CD4-positive, alpha-beta T cell (primary cell): ENCODE measurements at regions of chr7 and their contacts with region 1.

Region 1: DNA sequence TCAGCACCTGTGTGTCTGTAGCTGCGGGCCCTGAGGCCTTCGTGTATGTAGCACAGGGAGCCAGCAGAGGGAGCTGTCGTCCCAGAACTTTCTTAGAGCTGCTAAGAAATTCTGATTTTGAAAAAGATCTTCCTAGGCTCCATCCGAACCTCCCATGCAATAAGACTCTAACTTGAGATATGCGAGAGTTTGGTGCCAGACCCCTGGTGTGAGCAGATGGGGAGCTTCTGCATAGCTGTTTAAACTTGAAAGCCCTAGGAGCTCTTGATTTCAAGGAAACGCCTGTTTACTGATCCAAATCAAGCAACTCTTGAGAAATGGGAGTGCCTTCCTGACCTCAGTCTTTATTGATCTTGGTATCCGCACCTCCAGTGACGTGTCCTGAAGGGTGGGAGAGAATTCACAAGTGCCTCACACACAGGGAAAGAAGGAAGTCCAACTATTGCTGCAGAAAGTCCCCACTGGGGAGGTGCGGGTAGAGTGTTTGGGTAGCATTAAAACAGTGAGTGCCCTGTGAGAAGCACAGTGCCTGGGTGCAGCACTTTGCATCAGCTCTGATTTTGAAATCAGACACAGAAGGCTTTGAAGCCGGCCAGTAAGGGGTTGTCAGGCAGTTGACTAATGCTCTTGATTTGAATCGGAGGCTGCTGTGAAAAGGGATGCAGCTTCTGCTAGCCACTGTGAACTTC is 66.4 kb upstream of the STRIP2 start:
- DNase-seq: peak; percentile 51 to 84 (median 65)
- ATAC-seq: peak; percentile 85
- H3K4me3 ChIP-seq: peak overlapping the region; percentile 24
- H3K4me3 Mint-ChIP-seq: peak overlapping the region; percentile 9
- H3K27ac ChIP-seq: no peak overlapping the region
- H3K27ac Mint-ChIP-seq: no peak overlapping the region
- H3K4me1 ChIP-seq: peaks cover 15% of the 10 kb centered on the region
- H3K4me1 Mint-ChIP-seq: peaks cover 15% of the 10 kb centered on the region
- H3K27me3 ChIP-seq: no peaks in the 10 kb centered on the region
- H3K27me3 Mint-ChIP-seq: no peaks in the 10 kb centered on the region
- CTCF ChIP-seq: peak; percentile 78

Region 2: DNA sequence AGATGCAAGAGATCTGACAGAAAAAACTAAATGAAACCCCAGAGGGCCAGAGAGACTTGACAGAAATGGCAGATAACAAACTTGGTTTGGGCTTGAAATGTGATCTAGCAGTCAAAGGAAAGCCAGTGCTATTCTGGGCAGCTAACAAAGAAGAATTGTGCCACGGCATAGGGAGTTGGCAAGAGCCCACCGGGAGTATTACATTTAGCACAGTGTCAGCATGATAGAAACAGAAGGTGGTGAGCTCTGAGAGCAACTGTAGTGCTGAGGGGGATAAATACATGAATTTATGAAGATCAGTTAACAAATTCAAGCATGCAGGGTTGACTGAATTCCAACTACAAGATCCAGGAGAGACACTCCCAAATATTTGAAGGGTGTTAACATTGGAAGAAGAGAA is 51.9 kb before region 1 on chr7:
- CTCF ChIA-PET with region 1: no interaction called
- POLR2A ChIA-PET with region 1: no interaction called
- intact Hi-C with region 1: no loop called
- DNase-seq: no peak
- ATAC-seq: no peak
- H3K4me3 ChIP-seq: no peak overlapping the region
- H3K4me3 Mint-ChIP-seq: no peak overlapping the region
- H3K27ac ChIP-seq: no peak overlapping the region
- H3K27ac Mint-ChIP-seq: no peak overlapping the region
- H3K4me1 ChIP-seq: no peaks in the 10 kb centered on the region
- H3K4me1 Mint-ChIP-seq: peaks cover 7% of the 10 kb centered on the region
- H3K27me3 ChIP-seq: no peaks in the 10 kb centered on the region
- H3K27me3 Mint-ChIP-seq: no peaks in the 10 kb centered on the region
- CTCF ChIP-seq: no peak

Region 3: DNA sequence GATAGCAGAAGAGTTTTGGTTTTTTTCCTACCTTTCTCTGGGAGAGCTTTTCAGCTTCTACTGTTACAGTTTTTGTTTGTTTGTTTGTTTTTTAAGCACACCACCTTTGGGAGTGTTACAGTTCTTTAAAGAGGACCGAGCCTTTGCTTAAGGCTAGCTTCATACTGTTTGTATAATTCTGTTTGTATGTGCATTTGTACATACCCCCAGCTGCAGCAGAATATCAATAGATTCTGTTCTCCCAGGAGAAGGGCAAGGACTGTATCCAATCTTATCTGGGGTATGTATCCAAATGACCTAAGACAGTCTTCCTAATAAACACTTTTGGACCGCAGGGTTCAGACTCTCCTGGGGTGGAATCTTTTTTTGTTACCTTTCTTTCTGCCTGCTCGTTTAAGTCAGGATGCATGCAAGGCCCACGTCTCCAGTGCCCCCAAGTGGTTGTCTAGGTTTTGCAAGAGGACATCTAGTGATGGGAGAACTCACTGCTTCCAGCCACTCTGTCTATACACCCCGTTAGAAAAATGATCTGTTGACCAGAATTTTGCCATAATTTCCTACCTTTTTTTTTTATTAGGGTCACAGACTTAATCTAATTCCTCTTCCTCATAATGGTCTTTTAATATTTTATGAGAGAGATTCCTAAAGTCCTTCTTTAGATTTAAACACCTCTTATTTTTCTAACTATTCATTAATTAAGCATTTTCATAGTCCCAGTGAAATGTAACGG is 267.6 kb after region 1 on chr7:
- CTCF ChIA-PET with region 1: interaction called, 6 read pairs
- POLR2A ChIA-PET with region 1: interaction called, 3 read pairs
- intact Hi-C with region 1: loop called (anchors 2 to 5 kb)
- DNase-seq: peak; percentile 51 to 86 (median 59)
- ATAC-seq: peak; percentile 98
- H3K4me3 ChIP-seq: no peak overlapping the region
- H3K4me3 Mint-ChIP-seq: no peak overlapping the region
- H3K27ac ChIP-seq: no peak overlapping the region
- H3K27ac Mint-ChIP-seq: peak overlapping the region; percentile 19
- H3K4me1 ChIP-seq: peaks cover 11% of the 10 kb centered on the region
- H3K4me1 Mint-ChIP-seq: peaks cover 63% of the 10 kb centered on the region
- H3K27me3 ChIP-seq: no peaks in the 10 kb centered on the region
- H3K27me3 Mint-ChIP-seq: no peaks in the 10 kb centered on the region
- CTCF ChIP-seq: peak; percentile 76